ENCODE measurements at regions of chr9 and their contacts with region 1.

Region 1: DNA sequence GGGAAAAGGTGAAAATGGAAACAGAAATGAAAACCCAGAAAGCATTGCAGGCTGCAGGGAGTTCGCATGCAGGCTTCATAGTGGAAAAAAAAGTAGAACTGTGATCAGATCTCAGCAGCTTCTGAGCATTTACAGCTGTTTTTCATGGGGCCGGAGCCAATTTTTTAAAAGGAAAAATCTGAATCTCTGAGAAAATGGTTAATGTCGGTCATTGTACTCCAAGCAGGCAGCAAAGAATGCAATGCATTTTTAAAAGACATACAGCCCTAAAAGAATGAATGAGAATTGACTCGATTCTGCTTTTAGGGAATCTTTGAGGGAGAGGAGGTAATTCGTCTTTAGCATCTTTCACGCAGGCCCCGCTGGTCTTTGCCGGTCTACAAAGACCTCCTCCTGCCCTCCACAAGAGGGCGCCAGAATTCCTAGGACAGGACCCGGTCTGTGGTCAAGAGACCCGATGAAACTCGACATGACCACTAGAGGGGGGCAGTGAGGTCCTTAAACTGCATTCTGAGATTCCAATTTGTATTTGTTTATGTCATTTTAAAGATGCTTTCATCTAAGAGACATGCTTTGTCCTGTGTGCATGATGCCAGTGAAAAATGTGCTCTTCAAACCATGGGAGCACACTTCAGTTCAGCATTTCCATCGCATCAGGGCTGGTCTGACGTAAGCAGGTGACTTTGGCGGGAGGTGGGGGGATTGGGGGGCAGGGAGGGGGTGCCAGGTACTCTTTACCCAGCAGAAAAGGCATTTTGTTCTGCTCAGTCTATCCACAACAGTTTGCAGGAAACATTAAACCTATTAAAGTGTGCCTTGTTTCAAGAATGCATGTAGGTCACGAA is 43.7 kb upstream of the TMEM252 start:
- DNase-seq: peak; percentile 89
- H3K4me3 ChIP-seq: no peak overlapping the region
- H3K27ac ChIP-seq: no peak overlapping the region
- H3K4me1 ChIP-seq: no peaks in the 10 kb centered on the region
- H3K27me3 ChIP-seq: peaks cover 4% of the 10 kb centered on the region
- CTCF ChIP-seq: peak; percentile 99

Region 2: GRCh38 chr9:68685770-68686169 is 101.4 kb after region 1 on chr9:
- CTCF ChIA-PET with region 1: no interaction called
- POLR2A ChIA-PET with region 1: no interaction called
- intact Hi-C with region 1: loop called (anchors 10 kb)
- DNase-seq: peak; percentile 26
- H3K4me3 ChIP-seq: no peak overlapping the region
- H3K27ac ChIP-seq: no peak overlapping the region
- H3K4me1 ChIP-seq: no peaks in the 10 kb centered on the region
- H3K27me3 ChIP-seq: peaks cover 7% of the 10 kb centered on the region
- CTCF ChIP-seq: peak; percentile 54

Region 3: DNA sequence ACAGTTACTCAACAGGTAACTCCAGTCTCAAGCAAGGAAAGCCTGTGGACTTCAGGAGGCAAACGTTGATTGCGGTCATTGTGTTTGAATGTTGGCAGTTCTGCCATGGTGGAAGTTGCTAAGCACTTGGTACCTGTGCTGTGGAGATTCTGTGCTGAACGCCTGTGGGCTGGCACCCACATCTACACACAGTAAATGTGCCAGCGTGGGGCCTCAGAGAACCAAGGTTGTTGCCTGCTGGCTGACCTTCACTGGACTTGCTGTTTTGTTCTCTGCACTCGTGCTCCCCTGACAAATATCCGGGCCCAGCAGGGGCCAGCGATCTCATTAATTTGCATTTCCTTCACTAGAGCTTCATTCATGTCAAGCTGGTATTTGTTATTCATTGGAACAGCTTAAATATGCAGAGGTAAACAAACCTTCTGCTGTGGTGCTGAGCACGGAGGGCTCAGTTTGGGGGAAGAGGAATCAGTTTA is 287.7 kb after region 1 on chr9:
- CTCF ChIA-PET with region 1: no interaction called
- POLR2A ChIA-PET with region 1: no interaction called
- intact Hi-C with region 1: loop called (anchors 10 kb)
- DNase-seq: peak; percentile 14
- H3K4me3 ChIP-seq: no peak overlapping the region
- H3K27ac ChIP-seq: no peak overlapping the region
- H3K4me1 ChIP-seq: no peaks in the 10 kb centered on the region
- H3K27me3 ChIP-seq: peaks cover 21% of the 10 kb centered on the region
- CTCF ChIP-seq: no peak

Region 4: GRCh38 chr9:68949271-68950000 is 365.0 kb after region 1 on chr9:
- CTCF ChIA-PET with region 1: no interaction called
- POLR2A ChIA-PET with region 1: no interaction called
- intact Hi-C with region 1: loop called (anchors 1 kb)
- DNase-seq: peak; percentile 44
- H3K4me3 ChIP-seq: no peak overlapping the region
- H3K27ac ChIP-seq: no peak overlapping the region
- H3K4me1 ChIP-seq: no peaks in the 10 kb centered on the region
- H3K27me3 ChIP-seq: peaks cover 65% of the 10 kb centered on the region
- CTCF ChIP-seq: peak; percentile 65

Region 5: DNA sequence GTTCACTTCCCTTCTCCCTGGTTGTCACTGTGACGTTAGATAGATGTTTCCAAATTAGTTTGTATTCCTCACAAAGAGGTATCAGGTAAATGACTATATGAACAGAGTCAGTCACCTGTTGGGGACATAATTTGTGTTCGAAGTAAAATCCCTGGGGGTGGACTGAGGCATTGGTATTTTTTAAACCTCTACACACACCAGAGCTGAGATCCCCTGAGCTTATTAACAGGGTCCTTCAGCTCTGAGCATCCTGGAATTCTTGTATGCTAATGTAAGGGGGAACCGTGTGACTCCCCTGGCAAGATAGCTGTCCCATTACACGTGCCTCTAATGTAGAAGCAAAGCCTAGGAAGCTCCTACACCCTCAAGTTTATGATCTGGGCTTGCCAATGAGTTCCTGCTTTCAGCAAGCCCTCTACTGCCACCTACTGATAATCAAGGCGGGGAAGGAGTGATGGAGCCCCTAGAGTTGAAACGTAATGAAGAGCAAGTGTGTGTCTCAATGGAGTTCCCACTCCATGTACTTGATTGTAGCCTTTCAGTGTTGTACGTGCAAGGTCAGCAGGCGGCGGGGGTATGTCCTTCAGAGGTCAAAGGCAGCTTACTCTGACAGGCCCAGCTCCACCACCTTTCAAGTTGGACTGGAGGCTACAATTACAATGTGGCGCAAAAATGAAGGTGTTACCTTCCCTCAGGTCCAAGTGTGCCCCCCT is 415.1 kb after region 1 on chr9:
- CTCF ChIA-PET with region 1: interaction called, 4 read pairs
- POLR2A ChIA-PET with region 1: no interaction called
- intact Hi-C with region 1: loop called (anchors 1 kb)
- DNase-seq: peak; percentile 78
- H3K4me3 ChIP-seq: no peak overlapping the region
- H3K27ac ChIP-seq: no peak overlapping the region
- H3K4me1 ChIP-seq: no peaks in the 10 kb centered on the region
- H3K27me3 ChIP-seq: peaks cover 47% of the 10 kb centered on the region
- CTCF ChIP-seq: peak; percentile 82

Measured in A673 (cell line).